ENCODE measurements at regions of chr16 and their contacts with region 1.

Region 1: GRCh38 chr16:85313526-85314301 is 201.4 kb upstream of the CIBAR2 start:
- DNase-seq: no peak
- ATAC-seq: no peak
- H3K4me3 ChIP-seq: no peak overlapping the region
- H3K27ac ChIP-seq: no peak overlapping the region; a peak in 1 of 6 replicates
- H3K4me1 ChIP-seq: no peaks in the 10 kb centered on the region
- CTCF ChIP-seq: no peak
- EP300 ChIP-seq: no peak
- POLR2A ChIP-seq: no peak
- RAD21 ChIP-seq: no peak

Region 2: GRCh38 chr16:85090873-85091521 is 222.7 kb before region 1 on chr16:
- CTCF ChIA-PET with region 1: no interaction called
- POLR2A ChIA-PET with region 1: no interaction called
- DNase-seq: no peak
- ATAC-seq: no peak
- H3K4me3 ChIP-seq: no peak overlapping the region
- H3K27ac ChIP-seq: no peak overlapping the region
- H3K4me1 ChIP-seq: peaks cover 4% of the 10 kb centered on the region; the same call in 2 of the 3 replicates
- CTCF ChIP-seq: no peak
- EP300 ChIP-seq: no peak
- POLR2A ChIP-seq: no peak
- RAD21 ChIP-seq: no peak

Region 3: DNA sequence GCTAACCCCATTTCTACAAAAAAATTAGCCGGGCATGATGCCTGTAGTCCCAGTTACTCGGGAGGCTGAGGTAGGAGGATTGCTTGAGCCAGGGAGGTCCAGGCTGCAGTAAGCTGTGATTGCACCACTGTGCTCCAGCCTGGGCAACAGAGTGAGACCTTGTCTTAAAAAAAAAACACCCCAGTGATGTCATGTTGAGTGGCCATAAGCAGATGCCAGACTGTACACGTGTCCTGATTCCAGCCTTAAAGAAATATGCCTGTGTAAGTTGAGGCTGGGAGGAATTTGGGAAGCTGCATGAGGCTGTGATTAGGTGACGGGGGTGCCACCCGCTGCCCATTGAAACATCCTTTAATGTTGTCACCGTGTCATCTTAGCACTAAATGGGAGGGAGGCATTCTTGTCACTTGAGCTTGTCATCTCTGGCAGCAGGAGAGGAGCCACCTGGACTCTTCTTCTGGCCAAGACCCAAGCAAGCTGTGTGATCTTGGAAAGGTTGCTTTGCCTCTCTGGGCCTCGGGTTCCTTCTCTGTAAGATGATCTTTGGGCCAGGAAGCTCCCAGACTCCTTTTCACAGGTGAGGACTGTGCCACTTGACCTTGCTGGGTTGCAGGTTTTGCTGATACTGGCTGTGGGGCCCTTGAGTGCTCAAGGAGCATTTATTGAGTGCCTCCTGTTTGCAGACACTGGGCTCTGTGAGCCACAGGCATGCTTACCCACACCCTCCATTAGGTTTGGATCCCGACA is 103.1 kb before region 1 on chr16:
- CTCF ChIA-PET with region 1: no interaction called
- POLR2A ChIA-PET with region 1: no interaction called
- DNase-seq: peak in 1 of 2 experiments; percentile 33
- ATAC-seq: peak in 1 of 2 experiments; percentile 64; a peak in 3 of 6 replicates
- H3K4me3 ChIP-seq: no peak overlapping the region
- H3K27ac ChIP-seq: peak overlapping the region in 1 of 2 experiments; percentile 47; a peak in 1 of 6 replicates
- H3K4me1 ChIP-seq: peaks cover 27% of the 10 kb centered on the region; the same call in 2 of the 3 replicates
- CTCF ChIP-seq: no peak
- EP300 ChIP-seq: no peak
- POLR2A ChIP-seq: no peak
- RAD21 ChIP-seq: no peak

Region 4: DNA sequence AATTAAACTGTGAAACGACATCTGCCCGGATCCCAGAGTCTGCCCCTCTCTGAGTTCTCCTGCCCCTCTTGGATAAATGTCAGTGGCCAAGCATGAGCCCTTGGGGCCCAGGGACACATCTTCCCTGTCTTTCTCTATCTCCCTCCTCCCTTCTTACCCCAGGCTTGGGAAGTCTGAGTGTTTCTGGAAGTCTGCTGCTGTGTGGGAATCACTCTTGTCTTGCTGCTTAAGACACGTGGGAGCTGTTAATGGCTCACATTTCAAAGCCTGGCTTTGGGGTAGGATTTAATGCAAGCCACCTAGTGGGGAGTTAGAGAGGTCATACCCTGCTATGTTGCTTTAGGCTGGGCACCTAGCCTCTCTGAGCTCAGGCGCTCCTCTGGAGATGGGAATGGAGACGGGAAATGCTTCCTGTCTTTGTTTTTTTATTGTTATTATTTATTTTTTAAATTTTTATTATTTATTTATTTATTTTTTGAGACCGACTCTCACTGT is 17.0 kb after region 1 on chr16:
- CTCF ChIA-PET with region 1: interaction called, 11 read pairs
- POLR2A ChIA-PET with region 1: no interaction called
- DNase-seq: peak; percentile 79 to 85
- ATAC-seq: peak; percentile 84 to 95
- H3K4me3 ChIP-seq: no peak overlapping the region
- H3K27ac ChIP-seq: peak overlapping the region in 1 of 2 experiments; percentile 45; a peak in 2 of 6 replicates
- H3K4me1 ChIP-seq: peaks cover 10% of the 10 kb centered on the region; the same call in 2 of the 3 replicates
- CTCF ChIP-seq: peak; percentile 49
- EP300 ChIP-seq: no peak
- POLR2A ChIP-seq: no peak
- RAD21 ChIP-seq: no peak

Region 5: GRCh38 chr16:85573696-85574641 is 260.3 kb after region 1 on chr16:
- CTCF ChIA-PET with region 1: no interaction called
- POLR2A ChIA-PET with region 1: no interaction called
- DNase-seq: no peak
- ATAC-seq: no peak
- H3K4me3 ChIP-seq: no peak overlapping the region
- H3K27ac ChIP-seq: no peak overlapping the region
- H3K4me1 ChIP-seq: no peaks in the 10 kb centered on the region
- CTCF ChIP-seq: no peak
- EP300 ChIP-seq: no peak
- POLR2A ChIP-seq: no peak
- RAD21 ChIP-seq: no peak